ENCODE measurements at regions of chr11 and their contacts with region 1.

Region 1: DNA sequence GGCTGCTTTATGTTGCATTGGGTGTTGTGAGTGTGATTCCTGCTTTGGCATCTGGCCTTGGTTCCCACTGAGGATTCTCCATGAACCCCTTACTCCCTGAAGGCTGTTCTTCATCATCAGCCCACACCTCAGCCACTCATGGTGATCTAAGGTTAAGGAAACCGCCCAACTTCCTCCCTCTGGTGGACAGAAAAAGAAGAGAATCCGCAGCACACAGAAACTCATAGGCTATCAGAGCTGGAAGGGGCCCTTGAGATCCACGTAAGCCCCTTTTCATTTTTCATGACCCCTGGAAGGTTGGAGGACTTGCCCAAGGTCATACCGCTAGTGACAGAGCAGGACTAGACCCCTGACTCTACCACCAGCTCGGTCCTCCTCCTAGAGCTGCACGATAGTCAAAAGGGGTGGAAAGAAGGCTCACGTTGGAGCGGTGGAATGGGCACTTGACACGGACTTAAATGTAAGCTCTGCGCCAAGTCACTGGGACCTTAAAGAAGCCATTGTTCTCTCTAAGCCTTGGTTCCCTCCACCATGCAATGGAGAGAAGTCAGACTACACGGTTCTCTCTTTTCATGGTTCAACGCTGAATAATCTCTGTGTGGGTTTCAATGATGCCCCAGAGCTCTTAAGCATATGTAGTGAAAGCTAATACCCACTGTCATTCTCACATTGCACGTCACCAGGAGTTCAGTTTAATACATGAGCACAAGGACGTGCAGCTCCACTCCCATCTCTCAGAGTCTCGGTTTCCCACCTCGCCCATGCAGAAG is 83.6 kb upstream of the CRTAM start:
- DNase-seq: peak; percentile 69
- ATAC-seq: peak; percentile 49
- H3K4me3 Mint-ChIP-seq: no peak overlapping the region
- H3K27ac Mint-ChIP-seq: peak overlapping the region; percentile 74
- H3K4me1 Mint-ChIP-seq: peaks cover 64% of the 10 kb centered on the region
- H3K27me3 Mint-ChIP-seq: no peaks in the 10 kb centered on the region

Region 2: GRCh38 chr11:122578168-122578825 is 176.4 kb before region 1 on chr11:
- CTCF ChIA-PET with region 1: interaction called, 42 read pairs
- DNase-seq: no peak
- ATAC-seq: no peak
- H3K4me3 Mint-ChIP-seq: no peak overlapping the region
- H3K27ac Mint-ChIP-seq: no peak overlapping the region
- H3K4me1 Mint-ChIP-seq: peaks cover 11% of the 10 kb centered on the region
- H3K27me3 Mint-ChIP-seq: peaks cover 7% of the 10 kb centered on the region

Region 3: GRCh38 chr11:122668562-122669090 is 86.1 kb before region 1 on chr11:
- CTCF ChIA-PET with region 1: interaction called, 288 read pairs
- DNase-seq: no peak
- ATAC-seq: peak; percentile 73
- H3K4me3 Mint-ChIP-seq: peak overlapping the region; percentile 3
- H3K27ac Mint-ChIP-seq: peak overlapping the region; percentile 83
- H3K4me1 Mint-ChIP-seq: peaks cover 60% of the 10 kb centered on the region
- H3K27me3 Mint-ChIP-seq: no peaks in the 10 kb centered on the region

Region 4: DNA sequence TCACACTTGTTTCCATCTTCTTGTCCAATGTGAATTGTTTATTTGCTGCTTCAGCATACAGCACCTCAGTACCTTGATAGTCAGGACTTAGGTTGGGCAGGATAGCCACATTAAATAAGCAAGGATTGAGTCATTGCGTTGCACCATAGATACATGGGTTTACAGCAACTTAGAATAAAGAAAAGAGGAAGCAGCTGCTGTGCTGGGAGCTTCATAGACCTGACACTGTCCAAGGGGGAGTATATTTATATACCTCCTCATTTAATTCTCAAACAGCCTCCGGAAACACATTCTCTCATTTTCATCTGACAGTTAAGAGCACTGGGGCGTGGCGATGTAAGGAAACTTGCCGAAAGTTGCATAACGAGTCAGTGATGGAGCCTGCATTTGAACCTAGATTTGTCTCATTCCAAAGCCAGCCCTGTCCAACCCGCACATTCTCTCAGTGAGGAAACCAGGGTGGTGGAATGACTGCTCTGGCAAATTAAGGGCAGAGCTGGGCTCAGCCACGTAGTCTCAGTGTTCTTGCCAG is 57.0 kb before region 1 on chr11:
- CTCF ChIA-PET with region 1: interaction called, 58 read pairs
- DNase-seq: peak; percentile 70
- ATAC-seq: peak; percentile 87
- H3K4me3 Mint-ChIP-seq: peak overlapping the region; percentile 22
- H3K27ac Mint-ChIP-seq: peak overlapping the region; percentile 87
- H3K4me1 Mint-ChIP-seq: peaks cover 62% of the 10 kb centered on the region
- H3K27me3 Mint-ChIP-seq: no peaks in the 10 kb centered on the region

Region 5: DNA sequence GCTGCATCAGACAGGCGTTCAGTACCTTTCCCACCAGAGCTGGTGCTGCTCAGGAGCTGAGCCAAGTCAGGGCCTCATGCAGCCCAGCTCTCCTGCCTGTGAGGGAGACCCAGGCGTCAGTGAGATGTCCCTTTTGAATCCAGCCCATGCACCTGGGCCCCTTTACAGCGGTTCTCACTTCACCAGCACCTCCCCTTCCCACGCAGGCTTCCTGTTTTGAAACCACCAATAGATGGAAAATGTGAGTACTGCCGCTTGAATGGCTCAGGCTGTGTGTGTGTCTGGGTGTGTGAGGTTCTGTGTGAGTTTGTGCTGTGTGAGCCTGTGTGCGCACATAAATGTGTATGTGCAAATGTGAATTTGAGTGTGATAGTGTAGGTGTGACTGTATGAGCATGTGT is 10.8 kb before region 1 on chr11:
- CTCF ChIA-PET with region 1: interaction called, 64 read pairs
- DNase-seq: peak; percentile 91
- ATAC-seq: peak; percentile 71
- H3K4me3 Mint-ChIP-seq: no peak overlapping the region
- H3K27ac Mint-ChIP-seq: no peak overlapping the region
- H3K4me1 Mint-ChIP-seq: peaks cover 3% of the 10 kb centered on the region
- H3K27me3 Mint-ChIP-seq: no peaks in the 10 kb centered on the region

Region 6: GRCh38 chr11:122796128-122796717 is 41.5 kb after region 1 on chr11:
- CTCF ChIA-PET with region 1: interaction called, 14 read pairs
- DNase-seq: peak; percentile 77
- ATAC-seq: peak; percentile 86
- H3K4me3 Mint-ChIP-seq: no peak overlapping the region
- H3K27ac Mint-ChIP-seq: no peak overlapping the region
- H3K4me1 Mint-ChIP-seq: no peaks in the 10 kb centered on the region
- H3K27me3 Mint-ChIP-seq: no peaks in the 10 kb centered on the region